ENCODE measurements at regions of chr6 and their contacts with region 1.

Region 1: GRCh38 chr6:129893640-129894039 is 32.5 kb upstream of the TMEM244 start:
- DNase-seq: no peak
- ATAC-seq: peak; percentile 59; the same call in 2 of the 3 replicates
- H3K4me3 ChIP-seq: no peak overlapping the region
- H3K27ac ChIP-seq: no peak overlapping the region
- H3K4me1 ChIP-seq: no peaks in the 10 kb centered on the region; the same call in none of the 2 replicates
- H3K27me3 ChIP-seq: no peaks in the 10 kb centered on the region
- CTCF ChIP-seq: peak in 2 of 3 experiments; percentile 17 to 43; a peak in 4 of 6 replicates
- EP300 ChIP-seq: no peak
- POLR2A ChIP-seq: no peak
- RAD21 ChIP-seq: peak; percentile 61

Region 2: GRCh38 chr6:129359811-129360681 is 533.6 kb before region 1 on chr6:
- CTCF ChIA-PET with region 1: no interaction called
- POLR2A ChIA-PET with region 1: no interaction called
- RAD21 ChIA-PET with region 1: no interaction called
- SMC1A ChIA-PET with region 1: no interaction called
- in situ Hi-C with region 1: no loop called
- intact Hi-C with region 1: no loop called
- DNase-seq: no peak
- ATAC-seq: no peak
- H3K4me3 ChIP-seq: no peak overlapping the region
- H3K27ac ChIP-seq: no peak overlapping the region
- H3K4me1 ChIP-seq: no peaks in the 10 kb centered on the region
- H3K27me3 ChIP-seq: no peaks in the 10 kb centered on the region; a peak in 1 of 4 replicates
- CTCF ChIP-seq: no peak
- EP300 ChIP-seq: no peak
- POLR2A ChIP-seq: no peak
- RAD21 ChIP-seq: no peak

Region 3: DNA sequence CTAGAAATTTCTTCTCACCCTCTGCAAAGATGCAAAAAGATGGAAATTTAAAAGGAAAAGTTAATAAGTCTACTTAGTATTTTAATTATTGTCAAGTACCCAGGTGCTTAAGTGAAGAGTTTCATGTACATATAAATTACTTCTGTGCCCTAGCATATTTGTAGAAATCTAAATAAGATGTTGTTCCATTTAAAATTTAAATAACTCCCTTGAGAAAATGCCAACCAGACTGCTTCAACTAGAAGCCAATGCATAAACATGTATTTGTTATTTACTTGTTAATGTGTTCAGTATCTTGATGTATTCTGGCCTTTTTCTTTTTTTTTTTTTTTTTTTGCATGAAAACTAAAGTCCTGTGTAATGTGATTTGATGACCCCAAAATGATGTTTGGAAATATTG is 26.2 kb before region 1 on chr6:
- CTCF ChIA-PET with region 1: interaction called, 5 read pairs
- POLR2A ChIA-PET with region 1: no interaction called
- RAD21 ChIA-PET with region 1: interaction called, 3 read pairs
- SMC1A ChIA-PET with region 1: interaction called, 17 read pairs
- in situ Hi-C with region 1: no loop called
- intact Hi-C with region 1: no loop called
- DNase-seq: no peak
- ATAC-seq: no peak
- H3K4me3 ChIP-seq: no peak overlapping the region
- H3K27ac ChIP-seq: no peak overlapping the region
- H3K4me1 ChIP-seq: no peaks in the 10 kb centered on the region; the same call in 1 of the 2 replicates
- H3K27me3 ChIP-seq: no peaks in the 10 kb centered on the region
- CTCF ChIP-seq: no peak
- EP300 ChIP-seq: no peak
- POLR2A ChIP-seq: no peak
- RAD21 ChIP-seq: no peak

Region 4: DNA sequence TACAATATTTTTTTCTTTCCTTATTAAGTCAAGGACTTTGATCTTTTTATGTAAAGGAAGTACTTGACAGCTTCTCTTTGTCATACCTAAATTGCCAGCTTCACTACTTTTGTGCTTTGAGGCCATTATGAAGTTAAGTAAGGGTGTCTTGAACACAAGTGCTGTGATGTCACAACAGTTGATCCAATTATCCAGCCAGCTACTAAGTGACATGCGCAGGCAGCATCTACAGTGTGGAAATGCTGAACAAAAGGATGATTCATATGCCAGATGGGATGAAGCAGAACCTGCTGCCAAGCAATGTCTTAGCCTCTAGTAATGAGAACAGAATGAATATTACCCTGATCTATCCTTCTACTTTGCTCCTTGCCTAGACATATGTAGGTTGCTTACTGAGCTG is 35.8 kb after region 1 on chr6:
- CTCF ChIA-PET with region 1: interaction called, 4 read pairs
- POLR2A ChIA-PET with region 1: no interaction called
- RAD21 ChIA-PET with region 1: no interaction called
- SMC1A ChIA-PET with region 1: interaction called, 13 read pairs
- in situ Hi-C with region 1: no loop called
- intact Hi-C with region 1: no loop called
- DNase-seq: no peak
- ATAC-seq: no peak
- H3K4me3 ChIP-seq: no peak overlapping the region
- H3K27ac ChIP-seq: no peak overlapping the region
- H3K4me1 ChIP-seq: no peaks in the 10 kb centered on the region
- H3K27me3 ChIP-seq: no peaks in the 10 kb centered on the region
- CTCF ChIP-seq: no peak
- EP300 ChIP-seq: no peak
- POLR2A ChIP-seq: no peak
- RAD21 ChIP-seq: no peak

Region 5: GRCh38 chr6:130020907-130021629 is 127.4 kb after region 1 on chr6:
- CTCF ChIA-PET with region 1: interaction called, 38 read pairs
- POLR2A ChIA-PET with region 1: no interaction called
- RAD21 ChIA-PET with region 1: interaction called, 13 read pairs
- SMC1A ChIA-PET with region 1: interaction called, 24 read pairs
- in situ Hi-C with region 1: loop called (anchors 5 kb)
- intact Hi-C with region 1: loop called (anchors 1 kb)
- DNase-seq: peak; percentile 72
- ATAC-seq: peak; percentile 82
- H3K4me3 ChIP-seq: peak overlapping the region; percentile 82
- H3K27ac ChIP-seq: no peak overlapping the region
- H3K4me1 ChIP-seq: no peaks in the 10 kb centered on the region
- H3K27me3 ChIP-seq: no peaks in the 10 kb centered on the region
- CTCF ChIP-seq: peak; percentile 80 to 94 (median 81); a peak in 5 of 6 replicates
- EP300 ChIP-seq: no peak
- POLR2A ChIP-seq: no peak
- RAD21 ChIP-seq: peak; percentile 94

Region 6: DNA sequence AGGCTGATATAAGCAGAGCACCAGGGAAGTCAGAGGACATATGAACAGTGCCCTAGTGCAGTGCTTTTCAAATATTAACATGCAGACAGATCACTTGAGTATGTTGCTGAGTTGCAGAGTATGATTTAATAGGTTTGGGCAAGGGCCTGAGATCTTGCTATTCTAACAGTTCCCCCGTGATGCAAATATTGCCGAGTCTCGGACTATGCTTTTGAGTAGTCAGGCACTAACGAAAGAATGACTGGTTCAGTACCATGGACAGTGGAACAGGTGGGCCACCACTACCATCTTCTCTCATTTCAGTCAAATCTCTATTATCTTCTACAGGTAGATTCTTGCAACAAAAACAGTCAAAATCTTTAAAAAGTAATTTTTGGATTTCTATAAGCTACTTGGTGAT is 468.5 kb after region 1 on chr6:
- CTCF ChIA-PET with region 1: no interaction called
- POLR2A ChIA-PET with region 1: no interaction called
- RAD21 ChIA-PET with region 1: no interaction called
- SMC1A ChIA-PET with region 1: no interaction called
- in situ Hi-C with region 1: no loop called
- intact Hi-C with region 1: no loop called
- DNase-seq: no peak
- ATAC-seq: no peak
- H3K4me3 ChIP-seq: no peak overlapping the region
- H3K27ac ChIP-seq: no peak overlapping the region
- H3K4me1 ChIP-seq: no peaks in the 10 kb centered on the region
- H3K27me3 ChIP-seq: peaks cover 0 to 6% of the 10 kb centered on the region in 2 experiments; a peak in 1 of 4 replicates
- CTCF ChIP-seq: no peak
- EP300 ChIP-seq: no peak
- POLR2A ChIP-seq: no peak
- RAD21 ChIP-seq: no peak